ENCODE measurements at regions of chr12 and their contacts with region 1.

Region 1: GRCh38 chr12:27014085-27014858 is at the start of gene TM7SF3:
- DNase-seq: peak; percentile 95
- ATAC-seq: peak; percentile 90
- H3K4me3 Mint-ChIP-seq: peak within 1 kb of the TSS; percentile 92
- H3K27ac Mint-ChIP-seq: peak within 1 kb of the TSS; percentile 88
- H3K4me1 Mint-ChIP-seq: peaks cover 45% of the 10 kb centered on the region
- H3K27me3 Mint-ChIP-seq: no peaks in the 10 kb centered on the region
- CTCF ChIP-seq: peak; percentile 77
- total RNA-seq, gene TM7SF3: 75.3 to 80.9 TPM (median 75.7 TPM) in 3 replicates

Region 2: GRCh38 chr12:26746121-26746714 is 268.1 kb before region 1 on chr12:
- CTCF ChIA-PET with region 1: no interaction called
- POLR2A ChIA-PET with region 1: no interaction called
- DNase-seq: no peak
- ATAC-seq: no peak
- H3K4me3 Mint-ChIP-seq: no peak overlapping the region
- H3K27ac Mint-ChIP-seq: peak overlapping the region; percentile 12; the same call in 1 of the 2 replicates
- H3K4me1 Mint-ChIP-seq: peaks cover 48% of the 10 kb centered on the region
- H3K27me3 Mint-ChIP-seq: no peaks in the 10 kb centered on the region
- CTCF ChIP-seq: no peak

Region 3: DNA sequence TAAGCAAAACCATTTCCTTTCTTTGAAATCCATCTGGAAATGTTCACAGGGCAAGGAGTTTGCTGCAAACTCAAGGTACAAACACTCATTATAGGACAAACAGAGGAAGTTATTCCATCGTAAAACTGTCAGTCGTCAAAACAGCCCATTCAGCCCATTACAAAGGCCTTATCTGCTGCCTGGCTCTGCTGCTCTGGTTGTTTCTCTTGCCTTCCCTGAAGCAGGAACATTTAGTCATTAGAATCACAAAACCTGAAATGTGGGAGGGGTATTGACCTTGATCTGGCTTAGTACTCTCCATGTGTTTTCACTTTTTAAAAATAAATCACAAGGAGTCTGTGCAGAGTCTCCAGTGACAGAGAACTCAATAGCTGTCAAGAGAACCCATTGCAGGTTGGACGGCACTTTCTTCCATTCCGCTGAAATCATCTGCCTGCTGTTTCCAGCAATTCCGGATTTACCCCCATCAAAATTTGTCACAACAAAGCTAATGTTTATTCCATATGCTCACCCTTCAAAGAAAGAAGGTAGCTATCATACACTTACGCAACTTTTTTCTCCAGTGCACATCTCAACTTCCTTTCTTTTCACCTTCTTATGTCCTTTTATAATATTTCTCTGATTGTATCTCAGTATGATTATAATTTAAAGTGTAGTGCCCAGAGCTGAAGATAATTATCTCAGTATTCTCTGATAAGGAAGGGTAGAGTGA is 156.7 kb before region 1 on chr12:
- CTCF ChIA-PET with region 1: no interaction called
- POLR2A ChIA-PET with region 1: no interaction called
- DNase-seq: no peak
- ATAC-seq: peak; percentile 72
- H3K4me3 Mint-ChIP-seq: no peak overlapping the region
- H3K27ac Mint-ChIP-seq: no peak overlapping the region
- H3K4me1 Mint-ChIP-seq: peaks cover 2% of the 10 kb centered on the region; the same call in 1 of the 2 replicates
- H3K27me3 Mint-ChIP-seq: no peaks in the 10 kb centered on the region
- CTCF ChIP-seq: no peak

Region 4: GRCh38 chr12:27003421-27004381 is 10.6 kb before region 1 on chr12:
- CTCF ChIA-PET with region 1: interaction called, 11 read pairs
- POLR2A ChIA-PET with region 1: no interaction called
- DNase-seq: no peak
- ATAC-seq: peak; percentile 60; the same call in 1 of the 2 replicates
- H3K4me3 Mint-ChIP-seq: no peak overlapping the region
- H3K27ac Mint-ChIP-seq: peak overlapping the region; percentile 60; the same call in 1 of the 2 replicates
- H3K4me1 Mint-ChIP-seq: peaks cover 29% of the 10 kb centered on the region
- H3K27me3 Mint-ChIP-seq: no peaks in the 10 kb centered on the region
- CTCF ChIP-seq: no peak

Region 5: DNA sequence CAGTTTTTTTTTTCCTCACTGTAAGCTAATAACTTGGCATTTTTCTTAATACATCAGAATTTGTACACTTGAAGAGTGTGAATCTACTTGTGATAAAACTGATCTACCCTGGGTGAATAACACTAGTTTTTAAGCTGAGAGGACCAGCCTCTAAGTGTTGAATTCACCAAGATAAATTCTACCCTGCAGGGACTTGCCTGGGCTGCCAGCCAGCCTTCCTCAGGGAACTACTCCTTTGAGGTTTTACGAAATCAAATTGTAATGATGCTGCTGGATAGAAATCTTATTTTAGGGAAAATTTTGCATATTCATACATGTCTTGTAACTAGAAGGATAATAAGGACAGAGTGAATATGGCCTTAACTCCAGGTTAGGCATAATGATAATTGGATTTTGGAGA is 10.0 kb after region 1 on chr12:
- CTCF ChIA-PET with region 1: interaction called, 18 read pairs
- POLR2A ChIA-PET with region 1: interaction called, 6 read pairs
- DNase-seq: no peak
- ATAC-seq: no peak
- H3K4me3 Mint-ChIP-seq: peak overlapping the region; percentile 99
- H3K27ac Mint-ChIP-seq: no peak overlapping the region; the same call in 1 of the 2 replicates
- H3K4me1 Mint-ChIP-seq: peaks cover 22% of the 10 kb centered on the region
- H3K27me3 Mint-ChIP-seq: no peaks in the 10 kb centered on the region
- CTCF ChIP-seq: no peak